Activated CD4-positive, alpha-beta T cell treated with anti-CD3 and anti-CD28 coated beads for 36 hours (primary cell): ENCODE measurements at regions of chr1 and their contacts with region 1.

Region 1: DNA sequence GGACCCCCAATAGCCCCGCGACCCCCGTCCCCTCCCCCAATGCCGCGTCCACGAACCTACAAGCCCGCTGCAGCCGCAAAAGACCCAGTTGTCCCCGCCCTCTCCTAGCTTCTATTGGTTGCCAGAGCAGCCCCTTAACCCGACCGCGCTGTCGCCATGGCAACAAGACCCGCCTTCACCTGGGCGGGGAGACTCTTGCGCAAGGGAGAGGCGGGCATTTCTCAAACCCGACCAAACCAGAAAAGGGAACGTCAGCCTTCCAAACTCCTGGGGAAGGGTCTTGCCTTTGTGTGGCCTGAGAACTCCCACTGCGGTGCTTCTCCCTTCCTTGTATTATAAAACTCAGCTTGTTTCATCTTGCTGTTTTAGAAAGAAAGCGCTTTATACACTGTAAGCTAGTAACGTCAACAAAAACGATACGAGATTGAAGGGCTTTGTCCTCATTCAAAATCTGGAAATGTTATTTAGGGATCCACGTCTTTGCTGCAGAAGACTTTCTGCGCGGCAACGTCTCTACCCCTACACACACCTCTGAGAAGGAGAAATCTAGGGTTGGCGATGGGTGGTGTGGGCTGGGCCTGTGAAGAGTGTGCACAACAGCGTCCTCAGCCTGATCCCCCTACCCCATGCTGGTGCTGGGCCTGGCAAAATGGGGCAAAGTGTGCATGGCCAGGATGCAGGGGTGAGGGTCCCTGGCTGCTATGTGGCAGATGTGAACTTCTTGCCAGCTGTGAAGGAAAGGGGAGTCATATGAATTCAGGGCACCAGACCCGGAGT is at the start of gene TMEM9:
- DNase-seq: peak; percentile 99
- ATAC-seq: peak; percentile 96
- H3K4me3 Mint-ChIP-seq: peak within 1 kb of the TSS; percentile 78
- H3K27ac Mint-ChIP-seq: peak within 1 kb of the TSS; percentile 85
- H3K4me1 Mint-ChIP-seq: peaks cover 18% of the 10 kb centered on the region
- H3K27me3 Mint-ChIP-seq: peaks cover 4% of the 10 kb centered on the region
- total RNA-seq, gene TMEM9: 15.7 to 27.2 TPM

Region 2: DNA sequence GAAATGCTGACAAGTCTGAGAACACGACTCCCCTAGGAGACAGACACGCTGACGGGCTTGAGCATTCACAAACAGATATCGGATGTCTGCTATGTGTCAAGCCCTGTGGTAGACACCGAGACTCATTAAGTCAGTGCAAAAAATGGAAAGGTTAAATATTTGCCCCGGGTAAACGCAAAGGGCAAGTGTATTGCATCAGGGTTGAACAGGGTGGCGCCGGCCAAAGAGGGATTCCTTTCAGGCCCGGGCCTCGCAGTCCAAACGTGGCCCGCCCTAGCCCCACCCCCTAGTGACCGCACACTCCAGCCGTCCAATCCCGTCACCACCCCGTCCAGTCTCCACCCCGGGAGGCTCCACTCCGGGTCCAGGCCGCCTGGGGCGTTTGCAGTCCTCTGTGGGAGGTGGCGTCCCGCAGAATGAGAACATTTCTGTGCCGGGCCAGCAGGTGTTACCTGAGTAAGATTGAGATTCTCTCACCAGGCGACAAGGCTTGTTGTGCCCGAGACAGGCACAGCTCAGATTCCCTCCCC is 16.0 kb after region 1 on chr1:
- CTCF ChIA-PET with region 1: interaction called, 34 read pairs
- POLR2A ChIA-PET with region 1: interaction called, 20 read pairs
- intact Hi-C with region 1: loop called (anchors 1 kb)
- DNase-seq: peak; percentile 92
- ATAC-seq: peak; percentile 83
- H3K4me3 Mint-ChIP-seq: peak overlapping the region; percentile 71
- H3K27ac Mint-ChIP-seq: peak overlapping the region; percentile 90
- H3K4me1 Mint-ChIP-seq: peaks cover 21% of the 10 kb centered on the region
- H3K27me3 Mint-ChIP-seq: peaks cover 15% of the 10 kb centered on the region

Region 3: DNA sequence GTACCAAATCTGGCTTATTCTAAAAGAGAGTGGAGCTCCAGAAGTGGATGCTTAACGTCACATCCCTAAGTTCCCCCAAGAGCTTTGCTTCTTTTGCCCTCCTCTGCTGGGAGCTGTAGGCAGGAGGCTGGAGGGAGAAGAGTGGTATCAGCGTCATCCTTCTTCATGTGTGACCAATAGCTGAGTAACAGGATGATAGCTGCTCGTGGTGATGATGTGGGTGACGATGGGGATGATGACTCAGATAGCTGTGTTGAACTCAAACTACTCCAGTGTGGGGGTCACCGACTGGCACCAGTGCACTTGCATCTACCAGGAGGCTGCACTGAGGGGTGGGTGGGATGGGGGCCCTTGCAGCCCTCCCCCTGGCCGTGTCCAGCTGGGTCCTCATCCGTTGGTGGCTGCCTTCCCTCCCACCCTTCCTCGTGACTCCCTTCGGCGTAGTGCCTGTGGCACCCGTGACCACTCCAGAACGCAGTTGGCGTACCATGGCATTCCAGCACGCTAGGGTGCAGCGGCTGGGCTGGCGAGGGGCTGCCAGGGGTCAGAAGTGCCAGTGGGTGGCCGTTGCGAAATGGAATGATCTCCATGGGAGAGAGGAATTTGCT is 37.2 kb after region 1 on chr1:
- CTCF ChIA-PET with region 1: interaction called, 3 read pairs
- POLR2A ChIA-PET with region 1: no interaction called
- intact Hi-C with region 1: loop called in 1 of 2 experiments (anchors 1 kb)
- DNase-seq: peak; percentile 81
- ATAC-seq: peak; percentile 100
- H3K4me3 Mint-ChIP-seq: no peak overlapping the region
- H3K27ac Mint-ChIP-seq: no peak overlapping the region
- H3K4me1 Mint-ChIP-seq: peaks cover 4% of the 10 kb centered on the region
- H3K27me3 Mint-ChIP-seq: peaks cover 13% of the 10 kb centered on the region

Region 4: GRCh38 chr1:201506556-201507359 is 352.2 kb after region 1 on chr1 and contains the start of gene CSRP1:
- CTCF ChIA-PET with region 1: no interaction called
- POLR2A ChIA-PET with region 1: no interaction called
- intact Hi-C with region 1: loop called in 1 of 2 experiments (anchors 1 kb)
- DNase-seq: peak; percentile 92
- ATAC-seq: peak; percentile 94
- H3K4me3 Mint-ChIP-seq: peak within 1 kb of the TSS; percentile 91
- H3K27ac Mint-ChIP-seq: peak within 1 kb of the TSS; percentile 89
- H3K4me1 Mint-ChIP-seq: peaks cover 31% of the 10 kb centered on the region
- H3K27me3 Mint-ChIP-seq: no peaks in the 10 kb centered on the region
- total RNA-seq, gene CSRP1: 49.2 to 50.7 TPM